Ascending aorta (tissue), 2 donors: ENCODE measurements at regions of chr10 and their contacts with region 1.

Region 1: DNA sequence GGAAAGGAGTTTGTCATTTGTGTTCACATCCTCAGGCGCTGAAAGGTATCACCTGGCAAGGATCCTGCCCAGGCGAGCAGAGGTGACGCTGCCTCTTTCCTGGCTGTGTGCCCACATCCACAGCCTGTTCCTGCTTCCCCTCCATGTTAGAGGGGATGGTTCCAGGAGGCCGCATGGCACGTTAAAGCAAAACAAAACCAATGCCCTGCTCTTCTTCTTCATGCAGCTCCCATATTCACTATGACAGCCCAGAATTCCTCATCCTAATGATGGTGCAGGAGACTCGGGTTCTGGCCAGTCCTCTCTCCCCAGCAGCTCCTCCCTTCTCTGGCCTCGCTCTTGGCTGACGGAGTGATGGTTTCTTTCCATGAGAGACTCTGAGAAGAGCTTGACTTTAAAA is 678.5 kb upstream of the ANKRD30A start:
- DNase-seq: peak in 1 of 2 donors; percentile 66
- H3K4me3 ChIP-seq: peak overlapping the region; percentile 19 to 43
- H3K27ac ChIP-seq: peak overlapping the region; percentile 19 to 40
- H3K4me1 ChIP-seq: no peaks in the 10 kb centered on the region
- H3K27me3 ChIP-seq: no peaks in the 10 kb centered on the region
- CTCF ChIP-seq: no peak

Region 2: DNA sequence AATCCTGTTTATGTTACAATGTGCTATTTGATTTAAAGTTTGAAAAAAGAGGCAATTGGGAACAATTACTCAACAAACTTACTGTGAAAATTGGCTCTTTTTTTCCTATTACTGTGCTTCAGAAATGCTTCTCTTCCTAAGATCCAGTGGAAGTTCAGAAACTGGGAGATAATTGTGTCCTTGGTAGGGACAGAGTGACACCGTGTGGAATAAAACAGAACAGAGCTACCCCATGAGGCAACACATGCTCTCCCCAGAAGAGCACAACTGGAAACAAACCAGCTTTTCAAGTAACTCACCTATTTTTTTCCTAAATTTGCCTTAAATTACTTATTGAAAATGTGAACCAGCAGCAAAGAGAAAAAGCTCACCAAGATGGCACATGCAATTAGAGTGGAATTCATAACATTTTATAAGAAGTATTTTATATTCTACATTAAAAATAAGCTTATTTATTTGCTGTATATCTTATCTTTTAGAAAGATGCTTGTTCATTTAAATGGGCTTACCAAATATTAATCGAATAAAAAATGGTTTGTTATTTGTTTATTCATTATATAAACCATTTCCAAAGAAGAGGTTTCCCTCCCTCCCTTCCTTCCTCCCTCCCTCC is 332.5 kb after region 1 on chr10:
- intact Hi-C with region 1: loop called (anchors 5 kb)
- DNase-seq: no peak
- H3K4me3 ChIP-seq: no peak overlapping the region
- H3K27ac ChIP-seq: no peak overlapping the region
- H3K4me1 ChIP-seq: no peaks in the 10 kb centered on the region
- H3K27me3 ChIP-seq: no peaks in the 10 kb centered on the region
- CTCF ChIP-seq: peak; percentile 63 to 87 (median 70)